ENCODE measurements at regions of chr15 and their contacts with region 1.

Region 1: DNA sequence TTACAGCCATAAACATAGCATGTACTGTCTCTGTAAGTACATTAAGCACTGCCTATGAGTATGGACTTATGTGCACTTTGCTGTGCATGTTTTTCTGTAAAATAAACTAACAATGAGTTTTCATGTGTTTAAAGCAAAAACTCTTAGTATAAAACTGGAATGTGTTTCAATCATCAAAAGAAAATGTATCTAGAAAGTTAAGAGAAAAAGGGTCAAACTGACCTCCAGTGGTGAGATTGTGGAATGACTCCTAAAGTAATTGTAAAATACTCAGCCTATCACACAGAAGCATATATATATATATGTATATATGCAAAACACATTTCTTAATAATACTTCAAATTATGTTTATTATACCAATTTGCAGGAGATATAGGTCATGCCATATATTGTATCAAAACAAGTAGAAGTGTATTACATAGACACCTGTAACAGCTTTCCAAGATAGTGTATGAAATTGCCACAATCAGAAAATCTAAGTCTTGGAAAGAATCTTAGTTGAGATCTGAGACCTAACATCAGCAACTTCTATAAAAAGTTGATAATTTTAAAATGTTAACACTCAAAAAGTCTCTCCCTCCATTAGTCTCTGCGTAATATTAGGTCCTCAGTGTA is 199.6 kb downstream of the FMN1 start:
- DNase-seq: no peak
- H3K4me3 ChIP-seq: no peak overlapping the region
- H3K27ac ChIP-seq: no peak overlapping the region
- H3K4me1 ChIP-seq: no peaks in the 10 kb centered on the region
- H3K27me3 ChIP-seq: no peaks in the 10 kb centered on the region
- CTCF ChIP-seq: peak in 3 of 4 experiments; percentile 51 to 61 (median 59)
- POLR2A ChIP-seq: no peak

Region 2: DNA sequence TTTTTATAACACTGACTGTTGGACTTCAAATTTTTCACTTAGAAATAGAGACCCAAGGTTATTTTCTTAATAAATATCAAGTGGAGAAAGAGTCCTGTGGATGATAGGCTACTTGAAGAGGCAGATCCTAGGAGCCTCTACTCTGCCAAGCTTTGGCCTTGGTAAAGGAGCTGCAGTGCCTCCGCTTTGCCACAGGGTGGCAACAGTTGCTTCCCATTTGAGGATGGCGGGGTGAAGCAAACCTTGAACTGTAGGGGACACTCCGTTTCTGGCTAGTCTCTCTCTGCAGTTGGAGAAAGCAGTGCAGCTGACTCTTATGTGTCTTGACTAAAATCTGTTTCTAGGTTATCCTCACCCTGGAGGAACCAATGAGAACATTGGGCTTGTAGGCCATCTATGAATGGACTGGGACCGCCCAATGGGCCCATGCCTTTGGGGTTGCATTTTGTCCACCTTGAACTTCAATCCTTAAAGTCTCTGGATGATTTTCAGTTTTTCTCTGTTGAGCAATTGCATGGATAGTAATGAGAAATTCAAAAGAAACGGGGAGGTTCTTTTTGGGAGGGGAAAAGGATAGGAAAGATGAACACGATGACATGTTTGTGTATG is 343.6 kb before region 1 on chr15:
- intact Hi-C with region 1: loop called (anchors 5 kb)
- DNase-seq: no peak
- H3K4me3 ChIP-seq: no peak overlapping the region
- H3K27ac ChIP-seq: no peak overlapping the region
- H3K4me1 ChIP-seq: no peaks in the 10 kb centered on the region
- H3K27me3 ChIP-seq: no peaks in the 10 kb centered on the region
- CTCF ChIP-seq: peak; percentile 63 to 76 (median 74)
- POLR2A ChIP-seq: no peak

Region 3: GRCh38 chr15:32659340-32660155 is 335.4 kb before region 1 on chr15:
- intact Hi-C with region 1: loop called (anchors 2 kb)
- DNase-seq: peak; percentile 68
- H3K4me3 ChIP-seq: no peak overlapping the region
- H3K27ac ChIP-seq: peak overlapping the region in 1 of 2 donors; percentile 44
- H3K4me1 ChIP-seq: peaks cover 19% of the 10 kb centered on the region
- H3K27me3 ChIP-seq: no peaks in the 10 kb centered on the region
- CTCF ChIP-seq: no peak
- POLR2A ChIP-seq: no peak

Region 4: DNA sequence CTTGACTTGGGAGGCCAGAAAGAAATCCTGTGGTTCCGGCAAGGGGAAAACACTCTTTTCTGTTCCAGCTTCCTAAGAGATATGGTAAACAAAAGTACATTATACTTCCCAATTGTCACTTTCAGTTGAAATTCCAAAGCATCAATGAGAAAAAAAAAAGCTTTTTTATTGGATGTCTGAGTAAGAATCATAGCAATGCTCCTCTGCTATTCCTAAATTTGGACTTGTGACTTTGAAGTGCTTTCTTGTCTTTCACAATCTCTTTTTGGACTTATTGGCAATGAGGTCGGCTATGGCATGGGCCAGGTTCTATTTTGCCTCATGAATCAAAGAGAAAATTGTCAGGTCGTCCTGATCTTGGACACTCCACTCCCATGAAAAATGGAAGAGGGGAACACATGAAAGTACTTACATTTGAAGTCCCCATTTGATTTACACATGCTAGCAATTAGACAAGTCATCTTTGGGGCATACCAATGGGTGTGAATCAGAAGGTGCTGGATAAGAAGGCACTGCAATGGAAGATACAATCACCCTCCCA is 106.6 kb before region 1 on chr15:
- intact Hi-C with region 1: loop called (anchors 5 kb)
- DNase-seq: no peak
- H3K4me3 ChIP-seq: no peak overlapping the region
- H3K27ac ChIP-seq: no peak overlapping the region
- H3K4me1 ChIP-seq: no peaks in the 10 kb centered on the region
- H3K27me3 ChIP-seq: no peaks in the 10 kb centered on the region
- CTCF ChIP-seq: no peak
- POLR2A ChIP-seq: no peak

Region 5: DNA sequence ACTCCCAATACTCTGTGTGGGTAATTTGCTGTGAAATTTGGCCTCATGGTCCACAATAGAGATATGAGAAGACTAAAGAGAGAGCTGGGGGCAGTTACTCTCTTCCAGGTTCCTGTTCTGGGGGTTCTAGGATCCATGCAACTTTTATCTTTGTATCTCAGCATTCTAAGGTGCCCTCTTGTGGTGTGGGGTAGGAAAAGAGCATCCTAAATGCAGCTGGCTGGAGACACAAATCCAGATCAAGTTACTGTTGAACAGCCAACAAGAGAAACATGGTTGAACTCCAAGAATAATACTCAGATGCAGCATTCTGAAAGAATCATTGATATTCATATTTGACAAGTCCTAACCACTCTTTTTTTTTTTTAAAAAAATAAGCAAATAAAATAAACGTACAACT is 38.9 kb before region 1 on chr15:
- intact Hi-C with region 1: loop called (anchors 5 kb)
- DNase-seq: no peak
- H3K4me3 ChIP-seq: no peak overlapping the region
- H3K27ac ChIP-seq: no peak overlapping the region
- H3K4me1 ChIP-seq: peaks cover 2% of the 10 kb centered on the region
- H3K27me3 ChIP-seq: no peaks in the 10 kb centered on the region
- CTCF ChIP-seq: peak in 2 of 4 experiments; percentile 22 to 47
- POLR2A ChIP-seq: no peak